Activated T-helper 2 cell treated with anti-CD3 and anti-CD28 coated beads, Interferon-gamma antibody, Interleukin-2, Interleukin-4, amounts not matched to agents 10 μg/mL and 5 μg/mL and 100 μg/mL, durations not matched to agents 14 hours and 24 hours and 36 hours (primary cell): ENCODE measurements at regions of chr5 and their contacts with region 1.

Region 1: GRCh38 chr5:75236322-75237316 is at the start of gene ANKRD31:
- DNase-seq: peak; percentile 83
- H3K4me3 Mint-ChIP-seq: peak within 1 kb of the TSS; percentile 91
- H3K27ac Mint-ChIP-seq: peak within 1 kb of the TSS; percentile 88
- H3K4me1 Mint-ChIP-seq: peaks cover 8% of the 10 kb centered on the region
- H3K27me3 Mint-ChIP-seq: no peaks in the 10 kb centered on the region
- total RNA-seq, gene ANKRD31: 0.11 and 0.28 TPM in 2 replicates

Region 2: DNA sequence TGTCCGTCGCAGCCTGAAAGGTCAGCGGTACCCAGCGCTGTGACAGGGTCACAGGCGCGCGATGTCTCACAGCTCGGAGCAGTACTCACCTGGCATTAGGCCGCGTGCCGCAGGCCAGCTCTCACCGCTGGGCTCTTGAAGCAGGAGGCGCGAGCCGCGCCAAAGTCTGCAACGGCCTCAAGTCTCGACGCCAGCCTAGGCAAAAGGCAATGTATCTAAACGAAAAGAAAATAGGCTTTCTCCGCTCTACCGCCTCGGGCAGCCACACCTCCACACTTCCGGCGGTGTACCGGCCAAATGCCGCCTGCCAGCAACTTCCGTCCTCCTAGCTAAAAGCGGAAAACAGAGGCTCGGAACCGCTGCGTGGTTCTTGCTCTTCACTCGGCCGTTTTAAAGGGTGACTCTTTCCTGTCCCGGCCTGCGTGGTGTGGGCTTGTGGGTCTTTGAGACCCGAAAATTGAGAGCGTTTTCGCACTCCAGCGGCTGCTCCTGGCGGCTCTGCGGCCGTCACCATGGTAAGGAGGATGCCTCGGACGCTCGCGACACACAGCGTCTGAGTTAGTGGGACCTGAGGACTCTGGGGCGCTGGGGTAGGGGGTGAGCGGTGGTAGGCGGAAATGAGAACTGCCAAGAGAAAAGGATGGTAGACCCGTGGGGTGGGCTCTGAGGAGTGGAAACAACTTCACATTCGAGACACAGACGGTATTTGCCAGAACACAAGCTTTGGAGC is 469.6 kb before region 1 on chr5 and contains the starts of genes GFM2 and NSA2:
- intact Hi-C with region 1: loop called (anchors 5 kb)
- DNase-seq: peak; percentile 91
- H3K4me3 Mint-ChIP-seq: peak within 1 kb of the TSS; percentile 100
- H3K27ac Mint-ChIP-seq: peak within 1 kb of the TSS; percentile 98
- H3K4me1 Mint-ChIP-seq: peaks cover 29% of the 10 kb centered on the region
- H3K27me3 Mint-ChIP-seq: no peaks in the 10 kb centered on the region
- total RNA-seq, gene GFM2: 32.9 and 34.6 TPM in 2 replicates
- total RNA-seq, gene NSA2: 83.9 and 91.4 TPM in 2 replicates

Region 3: GRCh38 chr5:74798977-74799911 is 437.4 kb before region 1 on chr5:
- intact Hi-C with region 1: no loop called
- DNase-seq: no peak
- H3K4me3 Mint-ChIP-seq: no peak overlapping the region
- H3K27ac Mint-ChIP-seq: no peak overlapping the region
- H3K4me1 Mint-ChIP-seq: no peaks in the 10 kb centered on the region
- H3K27me3 Mint-ChIP-seq: no peaks in the 10 kb centered on the region

Region 4: DNA sequence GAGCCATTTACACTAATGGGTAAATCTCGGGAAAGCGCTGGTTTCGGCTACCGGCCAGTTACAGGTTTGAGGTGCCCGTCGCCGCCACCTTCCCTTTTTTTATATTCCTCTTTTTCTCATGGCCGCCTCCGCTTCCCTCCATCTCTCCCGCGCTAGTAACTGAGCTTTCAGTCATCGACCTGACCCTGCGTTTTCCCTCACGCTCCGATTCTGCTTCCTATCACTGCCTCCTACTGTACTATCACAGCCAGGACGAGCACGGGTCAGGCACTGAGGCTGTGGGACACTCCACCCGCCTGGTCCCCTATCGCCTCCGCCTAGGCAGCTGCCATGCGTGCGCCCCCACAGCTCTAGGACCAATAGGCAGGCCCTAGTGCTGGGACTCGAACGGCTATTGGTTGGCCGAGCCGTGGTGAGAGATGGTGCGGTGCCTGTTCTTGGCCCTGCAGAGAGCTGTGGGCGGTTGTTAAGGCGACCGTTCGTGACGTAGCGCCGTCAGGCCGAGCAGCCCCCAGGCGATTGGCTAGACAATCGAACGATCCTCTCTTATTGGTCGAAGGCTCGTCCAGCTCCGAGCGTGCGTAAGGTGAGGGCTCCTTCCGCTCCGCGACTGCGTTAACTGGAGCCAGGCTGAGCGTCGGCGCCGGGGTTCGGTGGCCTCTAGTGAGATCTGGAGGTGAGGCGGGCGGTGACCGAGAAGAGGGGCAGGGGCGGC is 100.2 kb after region 1 on chr5 and contains the start of gene HMGCR:
- intact Hi-C with region 1: loop called (anchors 1 kb)
- DNase-seq: peak; percentile 97
- H3K4me3 Mint-ChIP-seq: no peak within 1 kb of the TSS
- H3K27ac Mint-ChIP-seq: no peak within 1 kb of the TSS
- H3K4me1 Mint-ChIP-seq: peaks cover 33% of the 10 kb centered on the region
- H3K27me3 Mint-ChIP-seq: no peaks in the 10 kb centered on the region
- total RNA-seq, gene HMGCR: 122 and 123 TPM in 2 replicates

Region 5: GRCh38 chr5:75511435-75512384 is 275.1 kb after region 1 on chr5 and contains the starts of genes CERT1 and POLK:
- intact Hi-C with region 1: loop called (anchors 2 kb)
- DNase-seq: peak; percentile 95
- H3K4me3 Mint-ChIP-seq: peak within 1 kb of the TSS; percentile 100
- H3K27ac Mint-ChIP-seq: peak within 1 kb of the TSS; percentile 90
- H3K4me1 Mint-ChIP-seq: peaks cover 51% of the 10 kb centered on the region
- H3K27me3 Mint-ChIP-seq: no peaks in the 10 kb centered on the region
- total RNA-seq, gene CERT1: 38.6 and 43.7 TPM in 2 replicates
- total RNA-seq, gene POLK: 41.4 and 42.6 TPM in 2 replicates

Region 6: GRCh38 chr5:75668977-75669689 is 432.5 kb after region 1 on chr5:
- intact Hi-C with region 1: loop called (anchors 5 kb)
- DNase-seq: peak; percentile 57
- H3K4me3 Mint-ChIP-seq: peak overlapping the region; percentile 65
- H3K27ac Mint-ChIP-seq: peak overlapping the region; percentile 92
- H3K4me1 Mint-ChIP-seq: peaks cover 54% of the 10 kb centered on the region
- H3K27me3 Mint-ChIP-seq: no peaks in the 10 kb centered on the region

Region 7: GRCh38 chr5:75717082-75717922 is 480.7 kb after region 1 on chr5 and contains the start of gene POC5:
- intact Hi-C with region 1: loop called (anchors 2 kb)
- DNase-seq: peak; percentile 97
- H3K4me3 Mint-ChIP-seq: peak within 1 kb of the TSS; percentile 100
- H3K27ac Mint-ChIP-seq: peak within 1 kb of the TSS; percentile 100
- H3K4me1 Mint-ChIP-seq: peaks cover 29% of the 10 kb centered on the region
- H3K27me3 Mint-ChIP-seq: peaks cover 10% of the 10 kb centered on the region
- total RNA-seq, gene POC5: 16.2 and 16.5 TPM in 2 replicates